ENCODE measurements at regions of chr5 and their contacts with region 1.

Region 1: DNA sequence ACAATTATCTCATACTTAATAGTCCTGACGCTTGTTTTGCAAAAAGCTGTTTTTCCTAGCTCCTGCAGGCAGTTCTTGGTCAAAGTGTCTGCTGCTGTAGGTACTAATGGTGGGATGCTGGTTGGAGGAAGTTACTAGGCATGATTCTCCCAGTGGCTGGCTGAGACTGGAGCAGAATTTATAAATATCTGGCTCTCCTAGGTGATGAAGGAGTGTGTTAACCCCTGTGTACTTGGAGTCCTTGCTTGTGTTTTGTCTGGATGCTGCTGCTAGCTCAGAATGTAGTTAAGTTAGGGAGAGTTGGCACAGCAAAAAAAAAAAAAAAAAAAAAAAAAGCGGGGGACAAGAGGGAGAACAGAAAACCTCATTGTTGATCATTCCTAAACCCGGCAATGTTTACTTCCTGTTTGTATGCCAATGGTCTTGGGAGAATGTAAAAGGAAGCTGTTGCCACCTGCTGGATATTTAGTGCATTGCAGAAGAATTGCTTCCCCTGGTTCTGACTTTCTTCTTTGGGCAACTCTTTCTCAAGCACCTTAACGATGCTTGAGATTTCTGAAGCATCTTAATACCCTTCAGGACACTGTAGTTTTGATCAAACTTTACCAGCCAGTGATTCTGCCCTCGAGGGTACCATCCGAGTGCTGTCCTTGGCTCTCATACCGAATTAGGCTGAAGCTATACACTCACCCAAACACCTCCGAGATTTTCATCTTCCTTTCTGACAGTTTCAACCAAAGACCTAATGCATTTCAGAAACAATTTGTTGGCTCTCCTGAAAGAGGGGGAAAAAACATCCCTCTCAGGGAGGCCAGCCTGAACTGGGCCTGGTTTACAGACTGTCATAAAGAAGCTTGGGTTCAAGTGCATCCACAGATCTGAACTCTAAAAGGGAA is 71.7 kb upstream of the WWC1 start:
- DNase-seq: no peak
- H3K4me3 ChIP-seq: no peak overlapping the region
- CTCF ChIP-seq: peak; percentile 75

Region 2: DNA sequence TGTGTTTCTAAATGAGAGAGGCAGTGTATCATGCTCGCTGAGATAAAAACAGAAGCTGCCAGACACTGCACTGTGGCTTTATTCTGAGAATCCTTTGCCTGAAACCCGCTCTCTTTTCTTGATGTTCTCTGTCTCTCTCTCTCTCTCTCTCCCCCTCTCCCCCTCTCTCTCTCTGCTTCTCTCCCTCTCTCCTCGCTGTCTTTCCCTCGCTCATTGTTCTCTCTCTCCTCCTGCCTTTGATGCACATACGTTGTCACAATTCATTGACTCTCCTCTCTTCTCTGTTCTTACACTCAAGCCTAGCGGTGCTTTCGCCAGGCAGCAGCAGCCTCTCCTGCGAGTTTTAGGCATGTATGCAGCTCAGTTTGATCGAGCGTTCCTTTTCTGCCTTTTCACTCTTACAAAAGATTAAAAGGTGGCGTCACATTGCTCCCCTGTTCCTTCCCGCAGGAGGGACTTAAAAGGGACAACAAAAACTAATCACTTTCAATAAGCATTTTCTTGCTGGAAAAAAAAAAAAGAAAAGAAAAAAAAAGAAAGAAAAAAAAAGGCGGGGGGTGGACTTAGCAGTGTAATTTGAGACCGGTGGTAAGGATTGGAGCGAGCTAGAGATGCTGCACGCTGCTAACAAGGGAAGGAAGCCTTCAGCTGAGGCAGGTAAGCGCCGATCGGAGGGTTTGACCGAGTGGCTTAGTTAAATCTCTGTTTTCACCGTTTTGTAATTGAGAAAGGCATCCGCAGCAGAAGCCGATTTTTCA is 646.2 kb before region 1 on chr5:
- CTCF ChIA-PET with region 1: interaction called, 20 read pairs
- POLR2A ChIA-PET with region 1: no interaction called
- DNase-seq: no peak
- H3K4me3 ChIP-seq: peak overlapping the region; percentile 61
- CTCF ChIP-seq: no peak

Region 3: DNA sequence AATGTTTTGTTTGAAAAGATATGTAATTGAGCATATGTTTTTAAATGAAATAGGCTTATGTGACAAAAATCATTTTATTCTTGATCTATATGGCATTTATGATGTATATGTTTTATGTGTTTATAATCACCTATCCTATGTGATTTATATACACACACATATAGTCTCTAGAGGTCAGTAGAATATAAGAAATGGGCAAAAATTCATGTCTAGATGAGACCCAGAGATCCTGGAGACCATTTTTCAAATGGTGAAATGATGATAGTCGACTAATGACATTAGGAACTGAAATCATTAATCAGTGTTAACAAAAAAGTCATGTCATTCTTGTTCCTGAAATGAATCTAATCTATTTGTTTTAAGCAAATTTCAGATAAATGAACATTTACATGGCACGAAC is 637.5 kb before region 1 on chr5:
- CTCF ChIA-PET with region 1: interaction called, 49 read pairs
- POLR2A ChIA-PET with region 1: no interaction called
- DNase-seq: no peak
- H3K4me3 ChIP-seq: no peak overlapping the region
- CTCF ChIP-seq: peak; percentile 5

Region 4: DNA sequence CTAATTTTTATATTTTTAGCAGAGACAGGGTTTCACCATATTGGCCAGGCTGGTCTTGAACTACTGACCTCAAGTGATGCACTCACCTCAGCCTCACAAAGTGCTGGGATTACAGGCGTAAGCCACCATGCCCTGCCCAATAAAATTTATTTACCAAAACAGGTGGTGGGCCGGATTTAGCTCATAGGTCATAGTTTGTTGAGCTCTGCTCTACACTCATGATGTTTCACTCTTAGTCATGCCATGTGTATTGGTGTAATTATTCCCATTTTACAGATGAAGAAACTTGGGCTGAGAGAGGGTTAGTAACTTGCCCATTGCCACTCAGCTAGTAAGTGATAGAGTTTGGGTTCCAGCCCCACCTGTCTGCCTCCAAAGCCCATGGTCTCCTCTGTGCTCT is 21.4 kb before region 1 on chr5:
- CTCF ChIA-PET with region 1: interaction called, 27 read pairs
- POLR2A ChIA-PET with region 1: no interaction called
- DNase-seq: no peak
- H3K4me3 ChIP-seq: no peak overlapping the region
- CTCF ChIP-seq: no peak

Region 5: DNA sequence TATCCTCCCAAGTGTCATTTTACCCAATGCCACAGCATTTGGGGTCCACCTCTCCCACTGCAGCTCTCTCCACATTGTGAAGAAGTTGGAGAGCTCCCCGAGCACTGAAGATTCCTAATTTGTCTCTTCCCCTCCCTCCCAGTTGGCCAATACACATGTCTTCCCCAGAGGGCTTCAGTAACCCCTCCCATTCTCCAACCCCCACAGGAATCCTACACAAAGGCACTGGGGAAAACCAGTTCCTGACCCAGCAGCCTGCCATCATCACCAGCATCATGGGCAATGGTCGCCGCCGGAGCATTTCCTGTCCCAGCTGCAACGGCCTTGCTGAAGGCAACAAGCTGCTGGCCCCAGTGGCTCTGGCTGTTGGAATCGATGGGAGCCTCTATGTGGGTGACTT is 15.6 kb before region 1 on chr5:
- CTCF ChIA-PET with region 1: interaction called, 27 read pairs
- POLR2A ChIA-PET with region 1: no interaction called
- DNase-seq: no peak
- H3K4me3 ChIP-seq: no peak overlapping the region
- CTCF ChIP-seq: no peak

Region 6: DNA sequence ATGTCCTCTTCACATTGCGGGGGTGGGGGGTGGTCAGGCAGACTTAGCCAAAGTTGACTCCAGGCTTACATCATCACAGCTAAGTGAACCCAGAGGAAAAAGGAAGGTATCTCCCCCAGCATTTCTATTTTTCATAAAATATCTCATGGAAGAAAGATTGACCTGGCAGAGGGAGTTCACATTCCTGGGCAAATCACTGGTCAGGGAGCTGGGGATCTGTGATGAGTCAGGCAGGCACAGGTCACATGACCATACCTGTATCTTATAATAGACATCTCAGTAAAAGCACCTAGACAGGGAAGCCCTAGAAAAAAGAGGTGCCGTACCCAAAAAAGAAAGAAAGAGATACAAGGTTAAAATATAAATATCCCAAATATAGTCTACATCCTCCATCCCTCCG is 14.4 kb after region 1 on chr5:
- CTCF ChIA-PET with region 1: interaction called, 14 read pairs
- POLR2A ChIA-PET with region 1: no interaction called
- DNase-seq: no peak
- H3K4me3 ChIP-seq: no peak overlapping the region
- CTCF ChIP-seq: no peak

Region 7: GRCh38 chr5:168301593-168302388 is 82.0 kb after region 1 on chr5:
- CTCF ChIA-PET with region 1: no interaction called
- POLR2A ChIA-PET with region 1: no interaction called
- DNase-seq: no peak
- H3K4me3 ChIP-seq: no peak overlapping the region
- CTCF ChIP-seq: no peak

Region 8: DNA sequence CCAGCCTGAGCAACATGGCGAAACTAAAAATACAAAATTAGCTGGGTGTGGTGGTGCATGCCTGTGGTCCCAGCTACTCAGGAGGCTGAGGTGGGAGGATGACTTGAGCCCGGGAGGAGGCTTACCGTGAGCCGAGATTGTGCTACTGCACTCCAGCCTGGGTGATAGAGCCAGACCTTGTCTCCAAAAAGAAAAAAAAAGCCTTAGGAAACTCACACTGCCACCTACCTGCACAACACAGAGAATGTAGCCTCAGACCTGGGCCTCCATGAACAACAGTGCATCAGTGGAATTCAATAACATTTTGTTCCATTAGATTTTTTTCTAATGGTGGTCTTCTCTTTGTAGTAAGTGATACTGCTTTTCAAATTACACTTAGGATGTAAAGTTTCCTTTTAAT is 202.7 kb after region 1 on chr5:
- CTCF ChIA-PET with region 1: no interaction called
- POLR2A ChIA-PET with region 1: no interaction called
- DNase-seq: no peak
- H3K4me3 ChIP-seq: no peak overlapping the region
- CTCF ChIP-seq: no peak